ENCODE measurements at regions of chr9 and their contacts with region 1.

Region 1: DNA sequence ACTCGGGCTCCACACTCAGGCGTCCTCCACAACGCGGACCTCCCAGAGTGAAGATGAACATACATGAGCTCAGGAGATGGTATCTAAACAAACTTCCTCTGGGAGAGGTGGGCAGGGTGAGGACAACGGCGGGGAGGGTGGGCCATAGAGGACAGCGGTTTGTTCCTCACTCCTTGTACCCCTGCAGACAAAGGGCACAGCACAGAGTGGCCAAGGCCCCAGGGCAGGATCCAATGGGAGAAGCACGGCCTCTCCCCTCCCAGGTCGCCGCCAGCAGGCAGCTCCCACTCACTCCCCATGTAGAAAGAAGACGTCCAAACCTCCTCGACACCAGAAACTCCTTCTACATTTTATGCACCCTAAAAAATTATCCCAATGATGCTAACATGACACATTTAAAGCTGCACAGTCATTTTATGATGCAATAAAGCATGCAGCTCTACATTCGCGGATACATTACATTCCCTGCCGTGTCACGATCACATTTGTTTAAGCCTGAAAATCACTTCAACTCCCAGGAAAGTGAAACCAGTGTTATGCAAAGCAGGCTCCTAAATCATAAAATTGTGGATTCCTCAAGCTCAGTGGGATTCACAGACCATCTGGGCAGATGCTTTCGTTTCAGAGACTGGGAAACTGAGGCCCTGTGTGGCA is 87.5 kb upstream of the SARDH start:
- DNase-seq: no peak
- H3K4me3 ChIP-seq: no peak overlapping the region
- CTCF ChIP-seq: no peak

Region 2: GRCh38 chr9:133916159-133916541 is 90.5 kb after region 1 on chr9:
- in situ Hi-C with region 1: loop called (anchors 5 kb)
- DNase-seq: no peak
- H3K4me3 ChIP-seq: no peak overlapping the region
- CTCF ChIP-seq: no peak

Measured in astrocyte of the cerebellum (primary cell).